Left colon (tissue), 2 donors: ENCODE measurements at regions of chr5 and their contacts with region 1.

Region 1: DNA sequence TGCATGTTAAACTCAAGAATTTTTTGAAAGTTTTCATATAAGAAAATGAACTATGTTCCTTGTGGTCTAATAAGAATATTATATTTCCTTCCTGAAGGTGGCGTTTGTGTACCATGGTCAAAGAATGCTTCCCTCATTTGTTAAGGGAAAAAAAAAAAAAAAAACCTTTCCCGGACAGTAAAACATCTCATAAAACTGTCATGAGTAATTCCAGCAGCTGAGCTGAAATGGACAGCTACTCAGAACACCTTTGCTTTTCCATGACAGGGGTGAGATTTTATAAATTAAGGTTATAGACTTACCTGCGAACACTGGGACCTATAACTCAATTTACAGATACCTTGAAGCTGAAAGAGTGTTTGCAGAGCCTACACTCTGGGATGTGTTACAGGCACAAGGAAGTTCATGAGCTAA is 113.2 kb upstream of the RANBP3L start:
- DNase-seq: no peak
- ATAC-seq: peak; percentile 77

Region 2: DNA sequence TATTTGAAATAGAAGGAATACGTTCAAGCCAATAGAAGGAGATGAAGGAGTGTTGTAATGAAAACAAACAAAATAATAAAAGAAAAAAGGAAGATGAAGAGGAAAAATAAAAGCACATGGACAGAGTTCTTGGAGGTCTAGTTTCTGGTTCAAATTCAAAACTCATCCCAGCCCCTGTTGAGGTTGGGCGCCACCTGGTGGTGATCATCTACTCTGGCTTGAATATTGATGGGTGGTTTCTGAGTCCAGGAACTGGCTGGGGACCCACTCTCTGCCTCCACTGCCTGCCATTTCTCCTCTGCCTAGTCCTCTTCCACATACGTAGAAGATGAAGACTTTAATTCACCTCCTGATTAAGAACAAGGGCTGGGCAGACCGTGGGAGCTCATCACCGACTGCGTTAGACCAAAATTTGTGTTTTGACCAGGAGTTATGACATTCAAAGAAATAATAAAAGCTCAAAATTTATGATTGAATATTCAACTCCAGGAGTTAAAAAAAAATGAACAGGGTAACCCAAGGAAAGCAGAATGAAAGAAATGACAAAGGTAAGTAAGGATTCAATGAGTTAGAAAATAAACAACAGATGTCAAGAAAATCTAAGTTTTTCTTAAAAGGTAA is 92.6 kb after region 1 on chr5:
- intact Hi-C with region 1: loop called in 1 of 2 experiments (anchors 2 kb)
- DNase-seq: peak; percentile 62 to 86
- ATAC-seq: peak; percentile 57

Region 3: DNA sequence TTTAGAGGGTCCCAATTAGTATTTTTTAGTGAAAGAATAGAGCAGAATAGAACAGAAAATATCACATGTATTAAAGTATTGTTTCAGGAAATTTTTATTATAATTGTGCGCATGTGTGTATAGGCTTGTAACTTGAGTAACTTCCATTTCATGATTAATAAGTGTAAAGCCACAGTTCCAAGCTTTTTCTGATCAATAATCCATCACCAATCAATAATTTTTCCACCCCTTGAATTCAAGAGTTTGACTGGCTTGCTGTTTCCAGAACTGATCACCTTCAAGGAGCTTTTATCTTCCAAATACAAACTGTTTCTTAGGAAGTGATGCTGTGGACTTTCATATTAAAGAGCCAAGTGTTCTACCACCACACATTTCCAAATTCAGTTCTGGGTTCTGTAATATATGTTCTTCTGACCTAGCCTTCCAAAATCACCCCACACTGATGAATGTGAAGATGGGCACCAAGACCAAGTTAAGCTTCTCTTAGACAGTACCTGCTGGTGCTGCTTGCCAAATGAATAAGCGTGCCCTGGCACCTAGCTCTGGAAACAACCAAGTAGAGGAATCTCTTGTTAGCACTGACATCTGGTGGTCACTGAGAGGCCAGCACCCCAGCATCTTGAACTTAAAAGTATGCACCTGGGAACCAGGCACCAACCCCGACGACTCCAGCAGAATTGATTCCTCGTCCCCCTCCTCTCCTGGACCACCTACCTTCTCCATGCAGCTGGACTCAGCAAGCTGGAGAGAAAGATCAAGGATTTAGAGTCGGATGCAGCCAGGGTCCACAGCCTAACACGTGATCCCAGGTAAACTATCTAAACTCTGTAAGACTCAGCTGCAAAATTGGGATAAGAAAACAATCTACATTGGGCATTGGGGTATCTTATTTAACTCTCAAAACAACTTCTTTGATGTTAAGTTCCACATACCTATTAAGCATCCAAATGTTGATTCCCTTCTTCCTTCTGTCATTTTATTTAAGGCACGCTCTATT is 281.1 kb after region 1 on chr5:
- intact Hi-C with region 1: loop called in 1 of 2 experiments (anchors 5 kb)
- DNase-seq: peak in 1 of 2 donors; percentile 44
- ATAC-seq: peak; percentile 70